ENCODE measurements at regions of chr7 and their contacts with region 1.

Region 1: GRCh38 chr7:27774717-27775328 is 34.9 kb downstream of the TAX1BP1 start:
- DNase-seq: no peak
- ATAC-seq: no peak
- H3K4me3 Mint-ChIP-seq: no peak overlapping the region
- H3K27ac Mint-ChIP-seq: no peak overlapping the region
- H3K4me1 Mint-ChIP-seq: peaks cover 8% of the 10 kb centered on the region
- H3K27me3 Mint-ChIP-seq: no peaks in the 10 kb centered on the region
- CTCF ChIP-seq: no peak

Region 2: DNA sequence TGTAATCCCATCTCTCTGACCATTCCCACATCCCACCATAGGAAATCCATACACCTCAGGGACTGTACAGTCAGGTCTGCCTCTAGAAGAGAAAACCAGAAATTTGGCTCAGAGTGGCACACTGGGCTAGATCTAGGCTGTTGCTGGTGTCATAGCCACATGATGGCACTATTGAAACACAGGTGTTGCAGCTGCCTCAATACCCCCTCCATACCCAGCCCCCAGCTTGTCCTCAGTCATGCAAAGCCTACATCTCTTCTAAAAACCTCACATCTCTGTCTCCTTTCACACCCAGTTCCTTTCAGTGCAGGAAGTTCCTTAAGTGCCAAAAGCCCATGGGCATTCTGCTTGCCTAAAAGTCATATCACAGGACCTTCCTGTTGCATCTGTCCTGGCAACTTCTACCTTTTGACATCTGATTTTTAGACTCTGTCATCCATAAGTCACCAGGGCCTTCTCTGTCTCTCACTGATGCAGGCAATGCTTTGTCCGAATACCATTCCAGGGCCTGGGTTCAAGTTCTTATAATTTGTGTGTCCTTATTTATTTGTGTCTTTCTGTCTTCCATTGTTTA is 85.1 kb before region 1 on chr7:
- CTCF ChIA-PET with region 1: interaction called, 14 read pairs
- POLR2A ChIA-PET with region 1: no interaction called
- DNase-seq: peak; percentile 50
- ATAC-seq: peak; percentile 100
- H3K4me3 Mint-ChIP-seq: no peak overlapping the region
- H3K27ac Mint-ChIP-seq: no peak overlapping the region
- H3K4me1 Mint-ChIP-seq: peaks cover 10% of the 10 kb centered on the region
- H3K27me3 Mint-ChIP-seq: no peaks in the 10 kb centered on the region
- CTCF ChIP-seq: no peak

Region 3: GRCh38 chr7:27739909-27740448 is 34.8 kb before region 1 on chr7 and contains the start of gene TAX1BP1:
- CTCF ChIA-PET with region 1: interaction called, 17 read pairs
- POLR2A ChIA-PET with region 1: no interaction called
- DNase-seq: peak; percentile 91
- ATAC-seq: peak; percentile 80
- H3K4me3 Mint-ChIP-seq: peak within 1 kb of the TSS; percentile 94
- H3K27ac Mint-ChIP-seq: peak within 1 kb of the TSS; percentile 99
- H3K4me1 Mint-ChIP-seq: peaks cover 30% of the 10 kb centered on the region
- H3K27me3 Mint-ChIP-seq: no peaks in the 10 kb centered on the region
- CTCF ChIP-seq: no peak
- total RNA-seq, gene TAX1BP1: 51.3 to 69.9 TPM (median 52.4 TPM) in 3 replicates

Region 4: GRCh38 chr7:27745064-27745583 is 29.7 kb before region 1 on chr7:
- CTCF ChIA-PET with region 1: interaction called, 17 read pairs
- POLR2A ChIA-PET with region 1: no interaction called
- DNase-seq: no peak
- ATAC-seq: peak; percentile 67
- H3K4me3 Mint-ChIP-seq: no peak overlapping the region
- H3K27ac Mint-ChIP-seq: peak overlapping the region; percentile 94
- H3K4me1 Mint-ChIP-seq: peaks cover 38% of the 10 kb centered on the region
- H3K27me3 Mint-ChIP-seq: no peaks in the 10 kb centered on the region
- CTCF ChIP-seq: 0 out of 2 replicates have a peak, but pooled peaks have one; percentile 12

Region 5: GRCh38 chr7:27921081-27921836 is 146.4 kb after region 1 on chr7:
- CTCF ChIA-PET with region 1: interaction called, 17 read pairs
- POLR2A ChIA-PET with region 1: no interaction called
- DNase-seq: no peak
- ATAC-seq: peak; percentile 82
- H3K4me3 Mint-ChIP-seq: 0 out of 2 replicates have a peak overlapping the region, but pooled peaks have one; percentile 20
- H3K27ac Mint-ChIP-seq: peak overlapping the region; percentile 82
- H3K4me1 Mint-ChIP-seq: peaks cover 47% of the 10 kb centered on the region
- H3K27me3 Mint-ChIP-seq: no peaks in the 10 kb centered on the region; the same call in 1 of the 2 replicates
- CTCF ChIP-seq: no peak

Measured in WTC11 (cell line).